ENCODE measurements at regions of chr1 and their contacts with region 1.

Region 1: GRCh38 chr1:108125312-108126138 is 74.6 kb downstream of the SLC25A24 start:
- DNase-seq: peak; percentile 76
- ATAC-seq: peak; percentile 91
- H3K4me3 ChIP-seq: no peak overlapping the region
- H3K27ac ChIP-seq: no peak overlapping the region
- H3K4me1 ChIP-seq: peaks cover 7% of the 10 kb centered on the region
- H3K27me3 ChIP-seq: no peaks in the 10 kb centered on the region
- CTCF ChIP-seq: peak; percentile 92

Region 2: GRCh38 chr1:107782217-107782845 is 343.2 kb before region 1 on chr1:
- CTCF ChIA-PET with region 1: interaction called, 59 read pairs
- POLR2A ChIA-PET with region 1: interaction called, 5 read pairs
- intact Hi-C with region 1: loop called (anchors 1 kb)
- DNase-seq: peak; percentile 76
- ATAC-seq: peak; percentile 86
- H3K4me3 ChIP-seq: no peak overlapping the region
- H3K27ac ChIP-seq: no peak overlapping the region
- H3K4me1 ChIP-seq: peaks cover 7% of the 10 kb centered on the region
- H3K27me3 ChIP-seq: no peaks in the 10 kb centered on the region
- CTCF ChIP-seq: peak; percentile 88

Region 3: GRCh38 chr1:107897438-107898345 is 227.8 kb before region 1 on chr1:
- CTCF ChIA-PET with region 1: no interaction called
- POLR2A ChIA-PET with region 1: no interaction called
- intact Hi-C with region 1: loop called (anchors 2 kb)
- DNase-seq: no peak
- ATAC-seq: no peak
- H3K4me3 ChIP-seq: no peak overlapping the region
- H3K27ac ChIP-seq: no peak overlapping the region
- H3K4me1 ChIP-seq: no peaks in the 10 kb centered on the region
- H3K27me3 ChIP-seq: no peaks in the 10 kb centered on the region
- CTCF ChIP-seq: peak; percentile 25; the same call in 1 of the 2 replicates

Region 4: DNA sequence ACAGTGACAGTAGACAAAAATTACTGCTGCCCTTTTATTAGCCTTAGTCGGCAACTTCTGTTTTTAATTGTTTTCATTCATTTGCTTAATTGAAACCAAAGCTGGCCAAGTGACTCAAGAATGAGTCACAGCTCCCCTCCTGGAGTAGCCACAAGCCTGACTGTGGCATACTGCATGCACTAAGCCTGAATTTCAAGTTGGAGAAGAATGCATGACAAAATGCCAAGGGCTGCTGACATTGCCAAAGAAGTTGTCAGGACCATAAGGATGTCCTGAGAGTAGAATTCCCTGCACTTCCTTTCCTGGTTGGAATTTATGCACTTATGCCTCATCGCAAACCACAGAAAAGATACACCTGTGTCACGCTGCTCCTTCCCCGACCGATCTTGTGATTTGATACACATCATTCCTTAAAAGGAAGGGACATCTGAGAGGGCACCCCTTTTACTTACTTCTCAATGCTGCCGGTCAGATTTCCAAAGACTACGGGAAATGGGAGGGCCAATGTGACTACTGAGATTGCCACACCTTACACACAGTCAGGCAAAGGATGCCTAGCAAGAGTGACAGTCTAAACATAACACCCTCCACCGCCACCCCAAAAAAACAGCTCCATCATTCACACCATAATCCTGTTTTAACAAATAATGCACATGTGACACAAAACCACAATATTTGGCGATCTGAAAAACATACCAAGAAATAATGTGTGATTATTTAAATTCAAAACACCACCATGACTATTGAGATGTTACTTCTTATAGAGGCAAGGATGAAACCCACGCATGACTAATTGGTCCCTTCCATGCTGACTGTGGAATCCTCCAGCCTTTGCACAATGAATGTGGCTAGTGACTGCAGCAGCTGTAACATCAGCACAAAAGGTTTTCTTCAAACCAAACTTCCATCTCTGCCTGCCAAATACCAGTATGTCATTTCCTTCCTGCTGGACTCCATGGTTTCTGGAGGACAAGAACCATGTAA is 188.7 kb before region 1 on chr1:
- CTCF ChIA-PET with region 1: no interaction called
- POLR2A ChIA-PET with region 1: no interaction called
- intact Hi-C with region 1: loop called (anchors 5 kb)
- DNase-seq: peak; percentile 99
- ATAC-seq: peak; percentile 94
- H3K4me3 ChIP-seq: peak overlapping the region; percentile 2; the same call in 1 of the 2 replicates
- H3K27ac ChIP-seq: peak overlapping the region; percentile 65
- H3K4me1 ChIP-seq: peaks cover 28% of the 10 kb centered on the region
- H3K27me3 ChIP-seq: no peaks in the 10 kb centered on the region
- CTCF ChIP-seq: no peak

Region 5: GRCh38 chr1:107963601-107964335 is 161.8 kb before region 1 on chr1:
- CTCF ChIA-PET with region 1: no interaction called
- POLR2A ChIA-PET with region 1: no interaction called
- intact Hi-C with region 1: loop called (anchors 10 kb)
- DNase-seq: no peak
- ATAC-seq: no peak
- H3K4me3 ChIP-seq: no peak overlapping the region
- H3K27ac ChIP-seq: no peak overlapping the region
- H3K4me1 ChIP-seq: no peaks in the 10 kb centered on the region
- H3K27me3 ChIP-seq: peaks cover 10% of the 10 kb centered on the region
- CTCF ChIP-seq: no peak

Region 6: GRCh38 chr1:108034406-108034805 is 91.1 kb before region 1 on chr1:
- CTCF ChIA-PET with region 1: no interaction called
- POLR2A ChIA-PET with region 1: no interaction called
- intact Hi-C with region 1: loop called (anchors 1 kb)
- DNase-seq: peak; percentile 73
- ATAC-seq: peak; percentile 99
- H3K4me3 ChIP-seq: no peak overlapping the region
- H3K27ac ChIP-seq: peak overlapping the region; percentile 36; the same call in 1 of the 2 replicates
- H3K4me1 ChIP-seq: peaks cover 14% of the 10 kb centered on the region
- H3K27me3 ChIP-seq: no peaks in the 10 kb centered on the region
- CTCF ChIP-seq: no peak

Region 7: DNA sequence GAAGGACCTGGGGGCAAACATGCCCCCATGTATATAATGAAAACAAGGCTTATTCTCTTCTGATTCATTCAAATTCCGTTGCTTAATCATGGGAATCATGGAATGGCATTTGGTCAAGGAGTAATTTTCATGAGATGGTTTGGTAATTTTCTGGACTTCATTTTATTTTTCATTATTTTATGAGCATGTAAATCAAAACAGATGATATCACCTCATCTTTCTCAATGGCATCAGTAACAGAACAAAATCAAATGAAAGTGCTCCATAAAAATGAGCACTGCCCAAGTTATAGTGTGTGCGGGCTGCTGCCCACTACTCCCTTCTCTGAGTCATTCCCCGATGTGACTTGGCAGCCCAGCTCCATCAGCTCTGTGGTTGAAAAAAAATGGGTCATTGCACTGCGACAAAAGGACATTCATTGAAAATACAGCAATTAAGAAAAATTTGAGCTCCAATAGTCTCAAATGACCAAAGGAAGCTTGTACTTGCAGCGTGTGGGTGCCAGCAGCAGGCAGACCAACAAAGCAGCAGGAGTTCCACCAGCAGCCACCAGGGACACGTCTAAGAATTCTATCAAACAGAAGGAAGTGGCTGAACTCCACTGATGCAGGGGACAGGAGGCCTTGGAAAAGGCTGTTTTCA is 76.2 kb before region 1 on chr1:
- CTCF ChIA-PET with region 1: no interaction called
- POLR2A ChIA-PET with region 1: no interaction called
- intact Hi-C with region 1: loop called (anchors 1 kb)
- DNase-seq: peak; percentile 67
- ATAC-seq: peak; percentile 79
- H3K4me3 ChIP-seq: no peak overlapping the region
- H3K27ac ChIP-seq: no peak overlapping the region
- H3K4me1 ChIP-seq: peaks cover 27% of the 10 kb centered on the region
- H3K27me3 ChIP-seq: no peaks in the 10 kb centered on the region
- CTCF ChIP-seq: peak; percentile 65